AG04450 (cell line): ENCODE measurements at regions of chr16 and their contacts with region 1.

Region 1: DNA sequence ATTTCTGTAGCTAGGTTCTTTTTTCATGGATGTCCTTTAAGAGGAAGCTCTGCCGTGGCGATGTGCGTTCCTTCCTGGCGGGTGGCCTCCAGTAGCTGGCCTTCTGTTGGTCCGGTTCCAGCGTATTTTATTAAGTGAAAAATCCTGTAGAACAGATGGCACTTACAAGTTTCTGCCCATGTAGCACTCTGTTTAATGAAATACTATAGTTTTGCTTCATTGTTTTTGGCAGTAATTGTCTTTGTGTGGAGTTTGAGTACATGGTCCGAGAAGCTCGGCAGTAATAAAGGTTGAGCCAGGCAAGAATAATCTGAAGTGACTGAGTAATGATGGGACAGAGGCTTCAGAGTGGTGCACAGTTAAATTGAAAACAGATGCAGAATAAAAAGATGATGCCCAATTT is 20.4 kb downstream of the USP10 start:
- DNase-seq: no peak
- H3K4me3 ChIP-seq: no peak overlapping the region
- H3K27ac ChIP-seq: peak overlapping the region; percentile 13
- H3K27me3 ChIP-seq: no peaks in the 10 kb centered on the region
- CTCF ChIP-seq: no peak

Region 2: DNA sequence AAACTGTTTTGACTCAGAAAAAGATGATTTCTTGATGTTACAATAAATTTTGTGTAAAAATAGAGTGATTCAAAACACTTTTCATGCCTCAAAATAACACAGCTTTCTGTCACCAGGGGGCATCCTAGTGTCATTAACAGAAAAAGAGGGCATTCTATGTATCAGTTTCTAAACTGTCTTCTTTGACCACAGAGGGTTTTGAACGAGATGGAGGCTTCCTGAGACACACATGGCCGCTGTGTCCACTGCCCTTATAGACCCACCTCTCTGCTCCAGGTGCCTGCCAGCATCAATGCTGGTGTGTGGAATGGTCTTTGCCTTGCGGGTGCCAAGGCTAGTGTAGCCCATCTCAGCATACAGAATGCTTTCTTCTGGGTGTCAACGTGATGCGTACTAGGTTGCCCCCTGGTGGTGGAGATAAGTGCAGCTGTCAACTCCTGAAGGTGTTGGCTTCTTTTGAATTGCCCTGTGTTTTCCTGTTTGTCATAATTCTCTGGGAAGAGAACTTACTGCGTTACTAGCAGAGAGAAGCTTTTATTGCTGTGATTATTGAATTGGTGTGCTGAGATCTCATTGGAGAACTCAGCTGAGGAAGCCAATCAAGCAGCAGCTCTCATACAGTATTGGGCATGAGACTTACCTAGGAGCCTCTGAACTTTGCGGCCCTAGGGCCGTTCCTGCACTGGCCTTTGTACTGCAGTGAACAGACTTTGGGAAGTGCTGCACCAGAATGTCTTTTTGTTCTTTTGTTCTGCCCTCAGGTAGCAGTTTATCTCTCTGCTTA is 18.3 kb after region 1 on chr16:
- CTCF ChIA-PET with region 1: interaction called, 31 read pairs
- POLR2A ChIA-PET with region 1: no interaction called
- DNase-seq: peak; percentile 26
- H3K4me3 ChIP-seq: no peak overlapping the region
- H3K27ac ChIP-seq: no peak overlapping the region
- H3K27me3 ChIP-seq: no peaks in the 10 kb centered on the region
- CTCF ChIP-seq: peak; percentile 84

Region 3: GRCh38 chr16:84898447-84898846 is 178.3 kb after region 1 on chr16:
- CTCF ChIA-PET with region 1: interaction called, 12 read pairs
- POLR2A ChIA-PET with region 1: no interaction called
- DNase-seq: no peak
- H3K4me3 ChIP-seq: no peak overlapping the region
- H3K27ac ChIP-seq: no peak overlapping the region
- H3K27me3 ChIP-seq: no peaks in the 10 kb centered on the region
- CTCF ChIP-seq: no peak